ENCODE measurements at regions of chr2 and their contacts with region 1.

Region 1: DNA sequence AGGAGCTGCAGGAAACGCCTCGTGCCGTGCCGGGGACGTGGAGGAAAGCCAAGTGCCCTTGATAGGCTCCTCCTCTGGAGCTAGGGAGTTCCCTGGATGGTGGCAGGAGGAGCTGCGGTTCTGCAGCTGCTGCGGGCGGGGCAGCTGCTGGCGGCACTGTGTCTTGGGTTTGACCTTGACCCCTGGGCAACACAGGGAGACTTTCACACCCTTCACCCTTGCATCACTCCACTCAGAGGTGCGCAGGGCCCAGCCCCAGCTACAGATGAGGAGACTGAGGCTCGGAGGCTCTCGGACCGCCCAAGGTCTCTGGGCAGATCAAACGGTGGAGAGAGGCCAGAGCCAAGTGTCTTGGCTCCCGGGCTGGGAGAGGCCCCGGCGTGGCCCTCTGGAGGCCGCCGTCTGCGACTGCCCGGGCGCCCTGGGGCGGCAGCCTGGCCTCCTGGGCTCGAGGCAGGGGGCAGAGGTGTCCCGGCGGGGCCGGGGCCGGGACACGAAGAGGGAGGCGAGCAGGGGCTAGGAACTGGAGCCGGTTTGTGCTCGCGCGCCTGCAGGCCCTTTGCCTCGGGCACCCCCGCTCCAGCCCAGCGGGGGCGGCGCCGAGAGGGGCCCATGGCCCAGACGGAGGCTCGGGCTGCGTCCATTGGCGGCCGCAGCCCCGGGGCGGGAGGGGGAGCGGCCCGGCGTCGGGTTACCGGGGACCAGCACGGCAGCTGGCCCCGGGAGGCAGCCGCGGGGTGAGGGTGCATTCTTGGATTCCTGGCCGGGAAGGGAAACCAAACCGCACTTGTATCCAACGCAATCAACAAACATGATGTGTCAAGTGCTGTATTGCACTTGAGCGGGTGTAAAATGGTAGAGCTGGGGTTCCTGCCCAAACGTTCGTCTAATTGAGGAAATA is 129.6 kb upstream of the SLC1A4 start:
- DNase-seq: peak; percentile 92
- ATAC-seq: peak; percentile 89

Region 2: DNA sequence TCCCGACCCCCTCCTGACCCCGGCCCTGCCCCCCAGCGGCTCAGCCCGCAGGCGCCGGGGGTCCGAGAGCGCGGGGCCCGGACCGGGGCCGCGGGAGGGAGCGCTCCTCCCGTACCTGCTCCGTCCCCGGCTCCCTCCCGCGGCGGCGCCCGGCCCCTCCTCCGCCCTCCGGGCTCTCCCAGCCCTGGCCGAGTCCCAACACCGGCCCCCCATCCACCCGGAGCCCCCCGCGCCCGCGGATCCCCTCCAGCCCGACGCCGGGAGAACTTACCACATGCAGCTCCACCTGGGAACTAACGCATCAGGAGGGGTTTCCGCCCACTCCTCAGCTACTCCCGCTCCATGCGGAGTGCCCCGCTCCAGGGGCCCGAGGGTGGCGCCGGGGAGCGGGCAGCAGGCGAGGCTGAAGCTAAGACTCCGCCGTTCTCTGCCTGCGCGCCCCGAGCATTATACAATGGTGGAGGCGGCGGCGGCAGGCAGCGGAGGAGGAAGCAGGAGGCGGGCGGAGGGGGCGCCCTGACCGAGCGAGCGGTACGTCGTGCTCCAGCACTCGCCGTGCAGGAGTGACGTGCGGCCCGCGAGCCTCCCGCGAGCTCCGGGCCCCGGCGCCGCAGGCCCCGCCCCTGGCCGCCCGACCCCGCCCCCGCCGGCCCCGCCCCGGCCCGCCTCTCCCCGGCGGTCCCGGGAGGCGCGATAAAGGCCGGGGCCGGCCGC is 206.1 kb before region 1 on chr2 and contains the start of gene SERTAD2:
- intact Hi-C with region 1: loop called (anchors 1 kb)
- DNase-seq: peak; percentile 96
- ATAC-seq: peak; percentile 93
- total RNA-seq, gene SERTAD2: 13.6 TPM